ENCODE measurements at regions of chr7 and their contacts with region 1.

Region 1: GRCh38 chr7:45917658-45918057 is 3.4 kb downstream of the IGFBP3 start:
- DNase-seq: peak; percentile 80 to 89
- H3K4me3 ChIP-seq: peak overlapping the region in 2 of 4 donors; percentile 35 to 51
- H3K27ac ChIP-seq: no peak overlapping the region
- H3K4me1 ChIP-seq: peaks cover 26 to 50% (median 44%) of the 10 kb centered on the region in 4 donors
- H3K27me3 ChIP-seq: peaks cover 6 to 60% (median 41%) of the 10 kb centered on the region in 3 donors
- CTCF ChIP-seq: peak in 4 of 7 experiments; percentile 71 to 89 (median 85)
- EP300 ChIP-seq: no peak
- POLR2A ChIP-seq: no peak

Region 2: GRCh38 chr7:46352004-46352954 is 434.6 kb after region 1 on chr7:
- intact Hi-C with region 1: loop called (anchors 5 kb)
- DNase-seq: peak in 1 of 2 donors; percentile 78
- H3K4me3 ChIP-seq: no peak overlapping the region
- H3K27ac ChIP-seq: no peak overlapping the region
- H3K4me1 ChIP-seq: no peaks in the 10 kb centered on the region
- H3K27me3 ChIP-seq: no peaks in the 10 kb centered on the region
- CTCF ChIP-seq: peak in 4 of 7 experiments; percentile 32 to 59 (median 49)
- EP300 ChIP-seq: no peak
- POLR2A ChIP-seq: no peak

Region 3: GRCh38 chr7:47088329-47089067 is 1170.8 kb after region 1 on chr7:
- intact Hi-C with region 1: loop called (anchors 5 kb)
- DNase-seq: peak; percentile 50 to 84
- H3K4me3 ChIP-seq: no peak overlapping the region
- H3K27ac ChIP-seq: no peak overlapping the region
- H3K4me1 ChIP-seq: peaks cover 0 to 10% (median 3%) of the 10 kb centered on the region in 4 donors
- H3K27me3 ChIP-seq: no peaks in the 10 kb centered on the region
- CTCF ChIP-seq: peak in 5 of 7 experiments; percentile 64 to 78 (median 74)
- EP300 ChIP-seq: no peak
- POLR2A ChIP-seq: no peak

Region 4: DNA sequence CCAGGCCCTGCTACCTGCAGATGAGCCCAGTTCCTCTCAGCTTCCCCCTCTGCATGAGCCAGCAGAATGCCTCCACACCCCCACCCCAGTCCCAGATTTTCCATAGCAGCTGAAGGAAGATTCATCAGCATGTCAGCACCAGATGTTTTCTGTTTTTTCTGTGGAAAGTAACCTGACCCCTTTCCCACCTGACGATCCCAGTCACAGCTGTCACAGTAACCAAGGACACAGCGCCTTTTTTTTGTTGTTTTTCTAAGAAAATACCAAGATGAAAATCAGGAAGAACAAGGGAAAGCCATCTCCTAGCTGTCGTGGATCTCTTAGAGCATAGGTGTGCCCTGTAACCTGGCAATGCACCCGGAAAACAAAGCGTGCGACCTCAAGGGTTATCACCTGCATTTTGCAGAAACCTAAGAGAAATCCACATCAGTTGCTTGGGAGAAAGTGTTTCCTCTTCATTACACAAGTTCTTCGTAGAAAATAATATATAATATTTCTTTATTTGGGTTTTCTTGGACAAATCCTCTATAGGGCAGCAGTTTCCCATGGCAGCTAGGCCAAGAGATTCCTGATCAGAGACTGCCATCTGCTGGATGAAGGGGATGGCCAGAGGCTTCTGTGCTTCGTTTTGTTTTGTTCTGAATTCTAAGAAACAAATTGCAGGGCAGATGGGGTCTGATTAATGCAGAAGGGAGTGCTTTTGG is 1262.3 kb after region 1 on chr7:
- intact Hi-C with region 1: loop called (anchors 5 kb)
- DNase-seq: peak; percentile 43 to 87
- H3K4me3 ChIP-seq: no peak overlapping the region
- H3K27ac ChIP-seq: no peak overlapping the region
- H3K4me1 ChIP-seq: peaks cover 9 to 52% (median 24%) of the 10 kb centered on the region in 4 donors
- H3K27me3 ChIP-seq: no peaks in the 10 kb centered on the region
- CTCF ChIP-seq: peak in 5 of 7 experiments; percentile 58 to 73 (median 64)
- EP300 ChIP-seq: no peak
- POLR2A ChIP-seq: no peak

Measured in stomach (tissue), 19 donors.